MCF 10A (cell line): ENCODE measurements at regions of chr4 and their contacts with region 1.

Region 1: GRCh38 chr4:6673660-6674499 is 19.8 kb upstream of the S100P start:
- DNase-seq: peak; percentile 93
- H3K4me3 Mint-ChIP-seq: peak overlapping the region; percentile 88
- H3K27ac Mint-ChIP-seq: peak overlapping the region; percentile 71
- H3K4me1 Mint-ChIP-seq: peaks cover 22% of the 10 kb centered on the region
- H3K27me3 Mint-ChIP-seq: no peaks in the 10 kb centered on the region
- CTCF ChIP-seq: no peak

Region 2: DNA sequence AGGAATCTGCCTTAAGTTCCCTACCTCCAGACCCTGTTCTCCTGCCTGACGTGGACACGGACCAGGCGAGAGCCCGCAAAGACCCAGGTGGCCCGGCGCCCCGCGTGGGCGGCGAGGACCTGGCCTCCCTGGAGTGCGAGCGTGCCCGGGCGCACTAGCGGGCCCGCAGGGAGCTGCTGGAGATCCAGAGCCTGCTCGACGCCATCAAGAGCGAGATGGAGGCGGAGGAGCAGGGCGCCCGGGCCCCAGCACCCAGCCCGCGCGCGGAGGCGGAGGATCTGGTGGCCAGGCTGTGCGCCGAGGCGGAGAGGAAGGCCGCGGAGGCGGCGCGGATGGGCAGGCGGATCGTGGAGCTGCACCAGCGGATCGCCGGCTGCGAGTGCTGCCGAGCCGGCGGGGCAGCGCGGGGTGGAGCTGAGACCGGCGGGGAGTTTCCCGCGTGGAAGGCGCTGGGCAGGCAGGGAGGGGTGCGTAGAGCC is 15.2 kb before region 1 on chr4:
- CTCF ChIA-PET with region 1: interaction called, 5 read pairs
- POLR2A ChIA-PET with region 1: interaction called, 10 read pairs
- intact Hi-C with region 1: no loop called
- DNase-seq: no peak
- H3K4me3 Mint-ChIP-seq: no peak overlapping the region
- H3K27ac Mint-ChIP-seq: no peak overlapping the region
- H3K4me1 Mint-ChIP-seq: no peaks in the 10 kb centered on the region
- H3K27me3 Mint-ChIP-seq: no peaks in the 10 kb centered on the region
- CTCF ChIP-seq: no peak

Region 3: GRCh38 chr4:6688879-6689505 is 15.1 kb after region 1 on chr4:
- CTCF ChIA-PET with region 1: interaction called, 17 read pairs
- POLR2A ChIA-PET with region 1: interaction called, 79 read pairs
- intact Hi-C with region 1: loop called (anchors 2 kb)
- DNase-seq: peak; percentile 88
- H3K4me3 Mint-ChIP-seq: peak overlapping the region; percentile 31
- H3K27ac Mint-ChIP-seq: peak overlapping the region; percentile 85
- H3K4me1 Mint-ChIP-seq: peaks cover 24% of the 10 kb centered on the region
- H3K27me3 Mint-ChIP-seq: no peaks in the 10 kb centered on the region
- CTCF ChIP-seq: no peak

Region 4: DNA sequence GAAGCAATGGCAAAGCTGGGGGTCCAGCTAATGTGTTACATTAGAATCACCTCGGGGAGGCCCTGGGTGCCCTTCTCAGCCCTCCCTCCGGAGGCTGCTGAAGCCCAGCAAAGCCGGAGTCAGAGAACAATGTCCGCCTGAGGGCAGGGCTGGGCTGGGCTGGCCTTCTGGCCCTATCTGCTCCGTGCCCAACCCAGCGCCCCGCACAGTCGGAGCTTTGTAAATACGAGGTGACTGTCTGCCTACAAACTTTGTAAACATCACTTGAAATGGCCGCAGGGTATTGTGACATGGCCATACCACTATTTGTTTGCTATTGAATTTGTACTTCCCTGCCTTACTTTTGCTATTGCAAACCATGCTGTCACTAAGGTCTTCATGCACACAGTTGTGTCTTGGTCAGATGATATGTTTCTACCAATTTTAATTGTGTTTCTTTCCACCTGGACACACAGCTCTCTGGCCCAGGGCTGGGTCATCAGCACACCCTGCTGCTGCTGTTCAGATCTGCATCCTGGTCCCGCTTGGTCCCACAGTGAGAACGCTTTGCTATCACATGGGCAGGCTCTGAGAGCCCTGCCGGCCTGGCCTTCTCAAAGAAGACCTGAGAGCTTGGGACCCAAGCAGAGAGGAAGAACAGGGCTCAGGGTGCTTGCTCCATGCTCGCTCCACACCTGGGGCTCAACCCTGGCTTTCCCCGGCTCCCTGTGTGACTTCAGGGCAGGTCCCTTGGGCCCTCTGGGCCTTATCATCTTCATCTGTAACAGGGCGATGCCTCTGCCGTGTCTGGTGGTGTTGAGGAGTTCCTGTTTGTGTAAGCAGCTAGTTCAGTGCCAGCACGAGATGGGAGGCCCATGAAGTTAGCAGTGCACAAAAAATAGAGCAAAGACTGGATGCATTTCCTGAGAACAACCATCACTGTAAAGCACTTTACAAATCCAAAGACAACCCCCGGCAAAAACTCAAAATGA is 22.1 kb after region 1 on chr4:
- CTCF ChIA-PET with region 1: interaction called, 17 read pairs
- POLR2A ChIA-PET with region 1: interaction called, 79 read pairs
- intact Hi-C with region 1: loop called (anchors 2 kb)
- DNase-seq: peak; percentile 77
- H3K4me3 Mint-ChIP-seq: peak overlapping the region; percentile 47
- H3K27ac Mint-ChIP-seq: peak overlapping the region; percentile 95
- H3K4me1 Mint-ChIP-seq: peaks cover 37% of the 10 kb centered on the region
- H3K27me3 Mint-ChIP-seq: no peaks in the 10 kb centered on the region
- CTCF ChIP-seq: peak; percentile 20

Region 5: GRCh38 chr4:6701371-6701770 is 27.5 kb after region 1 on chr4:
- CTCF ChIA-PET with region 1: interaction called, 17 read pairs
- POLR2A ChIA-PET with region 1: interaction called, 101 read pairs
- intact Hi-C with region 1: no loop called
- DNase-seq: no peak
- H3K4me3 Mint-ChIP-seq: no peak overlapping the region
- H3K27ac Mint-ChIP-seq: no peak overlapping the region
- H3K4me1 Mint-ChIP-seq: peaks cover 31% of the 10 kb centered on the region
- H3K27me3 Mint-ChIP-seq: no peaks in the 10 kb centered on the region
- CTCF ChIP-seq: peak; percentile 40

Region 6: GRCh38 chr4:6709230-6710114 is 35.6 kb after region 1 on chr4 and contains the start of gene MRFAP1L1:
- CTCF ChIA-PET with region 1: interaction called, 13 read pairs
- POLR2A ChIA-PET with region 1: interaction called, 101 read pairs
- intact Hi-C with region 1: loop called (anchors 2 kb)
- DNase-seq: peak; percentile 96
- H3K4me3 Mint-ChIP-seq: peak within 1 kb of the TSS; percentile 98
- H3K27ac Mint-ChIP-seq: peak within 1 kb of the TSS; percentile 98
- H3K4me1 Mint-ChIP-seq: peaks cover 46% of the 10 kb centered on the region
- H3K27me3 Mint-ChIP-seq: no peaks in the 10 kb centered on the region
- CTCF ChIP-seq: peak; percentile 6
- total RNA-seq, gene MRFAP1L1: 42.5 and 63.2 TPM in 2 replicates

Region 7: DNA sequence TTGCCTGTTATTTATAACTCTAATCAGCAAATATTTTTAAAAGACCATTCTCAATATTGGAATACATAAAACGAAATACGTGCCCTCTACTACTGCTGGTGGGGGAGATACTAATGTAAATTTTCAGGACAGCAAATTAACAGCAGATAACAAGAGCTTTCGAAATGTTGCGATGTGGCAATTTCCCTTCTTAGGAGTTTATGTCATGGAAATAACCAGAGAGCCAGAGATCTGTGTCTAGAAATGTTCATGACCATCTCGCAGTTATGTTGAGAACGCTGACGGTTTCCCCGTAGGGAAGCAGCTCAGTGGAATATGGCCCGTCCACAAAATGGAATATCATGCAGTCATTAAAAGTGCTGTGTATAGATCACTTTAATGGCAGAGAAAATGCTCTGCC is 999.2 kb after region 1 on chr4:
- CTCF ChIA-PET with region 1: no interaction called
- POLR2A ChIA-PET with region 1: no interaction called
- intact Hi-C with region 1: no loop called
- DNase-seq: no peak
- H3K4me3 Mint-ChIP-seq: no peak overlapping the region
- H3K27ac Mint-ChIP-seq: no peak overlapping the region
- H3K4me1 Mint-ChIP-seq: peaks cover 14% of the 10 kb centered on the region
- H3K27me3 Mint-ChIP-seq: peaks cover 24% of the 10 kb centered on the region
- CTCF ChIP-seq: no peak